Ovary (tissue), 10 donors: ENCODE measurements at regions of chr4 and their contacts with region 1.

Region 1: DNA sequence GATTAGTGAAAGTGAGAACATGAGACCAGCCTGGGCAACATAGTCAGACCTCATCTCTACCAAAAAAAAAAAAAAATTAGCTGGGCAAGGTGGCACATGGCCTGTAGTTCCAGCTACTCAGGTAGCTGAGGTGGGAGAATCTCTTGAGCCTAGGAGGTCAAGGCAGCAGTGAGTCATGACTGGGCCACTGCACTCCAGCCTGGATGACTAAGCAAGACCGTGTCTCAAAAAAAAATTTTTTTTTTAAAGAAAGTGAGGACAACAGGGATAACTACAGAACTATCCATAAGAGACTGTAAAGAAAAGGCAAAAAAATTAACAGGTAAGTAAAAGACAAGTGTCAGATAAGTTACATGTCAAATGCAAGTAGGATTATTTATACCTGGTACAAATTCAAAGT is 13.5 kb upstream of the SPP1 start:
- DNase-seq: no peak
- H3K4me3 ChIP-seq: no peak overlapping the region
- H3K27ac ChIP-seq: no peak overlapping the region
- H3K4me1 ChIP-seq: no peaks in the 10 kb centered on the region
- H3K27me3 ChIP-seq: no peaks in the 10 kb centered on the region
- CTCF ChIP-seq: no peak
- EP300 ChIP-seq: no peak
- POLR2A ChIP-seq: no peak

Region 2: DNA sequence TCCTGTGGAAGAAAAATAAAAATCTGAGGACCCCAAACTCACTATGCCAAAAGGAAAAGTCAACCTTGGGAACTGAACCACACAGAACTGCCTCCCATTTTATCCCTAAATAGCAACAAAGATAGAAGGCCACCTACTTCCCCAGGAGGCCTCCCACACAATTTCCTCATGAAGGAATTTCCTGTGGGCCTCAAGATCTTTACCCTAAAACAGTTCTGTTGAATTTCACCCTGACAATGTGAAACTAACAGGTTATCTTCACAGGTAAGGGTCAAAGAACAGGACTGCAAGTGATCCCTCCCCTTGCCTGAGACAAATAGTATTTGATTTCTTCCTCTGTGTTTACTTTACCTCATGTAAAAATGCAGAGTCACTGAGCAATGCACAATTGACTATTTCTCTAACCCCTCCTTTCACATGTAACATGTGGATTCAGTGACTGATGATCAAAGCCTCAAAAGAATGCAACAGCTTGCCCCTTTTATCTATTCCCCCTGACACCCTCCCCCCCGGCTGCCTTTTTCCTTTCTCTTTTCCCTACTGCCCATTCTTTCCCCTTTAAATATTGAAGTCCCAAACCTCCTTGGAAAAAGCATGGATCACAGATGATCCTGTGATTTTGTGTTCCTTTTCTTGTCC is 95.9 kb before region 1 on chr4:
- intact Hi-C with region 1: loop called in 1 of 4 experiments (anchors 10 kb)
- DNase-seq: no peak
- H3K4me3 ChIP-seq: no peak overlapping the region
- H3K27ac ChIP-seq: no peak overlapping the region
- H3K4me1 ChIP-seq: no peaks in the 10 kb centered on the region
- H3K27me3 ChIP-seq: no peaks in the 10 kb centered on the region
- CTCF ChIP-seq: no peak
- EP300 ChIP-seq: no peak
- POLR2A ChIP-seq: no peak

Region 3: GRCh38 chr4:88033309-88033708 is 71.3 kb after region 1 on chr4:
- intact Hi-C with region 1: no loop called
- DNase-seq: peak in 1 of 5 donors; percentile 51
- H3K4me3 ChIP-seq: no peak overlapping the region
- H3K27ac ChIP-seq: no peak overlapping the region
- H3K4me1 ChIP-seq: no peaks in the 10 kb centered on the region
- H3K27me3 ChIP-seq: no peaks in the 10 kb centered on the region
- CTCF ChIP-seq: peak; percentile 33 to 57 (median 49)
- EP300 ChIP-seq: no peak
- POLR2A ChIP-seq: no peak